Psoas muscle (tissue), 8 donors: ENCODE measurements at regions of chr7 and their contacts with region 1.

Region 1: DNA sequence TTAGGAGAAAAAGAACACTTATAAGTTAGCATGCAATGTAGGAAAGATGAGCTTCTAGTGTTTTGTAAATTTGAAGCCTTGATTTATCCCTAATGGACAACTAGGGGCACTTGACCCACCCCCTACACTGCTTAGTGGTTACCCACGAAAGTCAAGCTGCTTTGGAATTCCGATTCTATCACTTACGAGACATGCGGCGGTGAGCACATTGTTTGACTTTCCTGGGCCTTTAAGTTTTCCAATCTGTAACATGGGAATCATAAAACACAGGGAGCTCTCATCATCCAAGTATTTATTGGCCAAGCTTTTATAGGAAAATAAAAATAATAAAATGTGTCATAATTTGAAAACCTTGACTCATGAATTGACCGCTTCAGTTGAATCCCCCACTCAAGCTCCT is 78.7 kb upstream of the PDK4 start:
- DNase-seq: no peak
- ATAC-seq: no peak
- H3K4me3 ChIP-seq: no peak overlapping the region
- H3K27ac ChIP-seq: no peak overlapping the region
- H3K4me1 ChIP-seq: no peaks in the 10 kb centered on the region
- H3K27me3 ChIP-seq: no peaks in the 10 kb centered on the region
- CTCF ChIP-seq: no peak

Region 2: GRCh38 chr7:95632609-95633008 is 42.4 kb before region 1 on chr7:
- intact Hi-C with region 1: loop called in 1 of 2 experiments (anchors 5 kb)
- DNase-seq: no peak
- ATAC-seq: no peak
- H3K4me3 ChIP-seq: no peak overlapping the region
- H3K27ac ChIP-seq: no peak overlapping the region
- H3K4me1 ChIP-seq: peaks cover 8% of the 10 kb centered on the region
- H3K27me3 ChIP-seq: no peaks in the 10 kb centered on the region
- CTCF ChIP-seq: no peak